ENCODE measurements at regions of chr5 and their contacts with region 1.

Region 1: GRCh38 chr5:142713121-142713706 is 27.3 kb upstream of the FGF1 start:
- DNase-seq: peak; percentile 96
- H3K4me3 Mint-ChIP-seq: peak overlapping the region; percentile 80
- H3K27ac Mint-ChIP-seq: peak overlapping the region; percentile 63
- H3K4me1 Mint-ChIP-seq: peaks cover 23% of the 10 kb centered on the region
- H3K27me3 Mint-ChIP-seq: no peaks in the 10 kb centered on the region
- CTCF ChIP-seq: peak; percentile 99

Region 2: DNA sequence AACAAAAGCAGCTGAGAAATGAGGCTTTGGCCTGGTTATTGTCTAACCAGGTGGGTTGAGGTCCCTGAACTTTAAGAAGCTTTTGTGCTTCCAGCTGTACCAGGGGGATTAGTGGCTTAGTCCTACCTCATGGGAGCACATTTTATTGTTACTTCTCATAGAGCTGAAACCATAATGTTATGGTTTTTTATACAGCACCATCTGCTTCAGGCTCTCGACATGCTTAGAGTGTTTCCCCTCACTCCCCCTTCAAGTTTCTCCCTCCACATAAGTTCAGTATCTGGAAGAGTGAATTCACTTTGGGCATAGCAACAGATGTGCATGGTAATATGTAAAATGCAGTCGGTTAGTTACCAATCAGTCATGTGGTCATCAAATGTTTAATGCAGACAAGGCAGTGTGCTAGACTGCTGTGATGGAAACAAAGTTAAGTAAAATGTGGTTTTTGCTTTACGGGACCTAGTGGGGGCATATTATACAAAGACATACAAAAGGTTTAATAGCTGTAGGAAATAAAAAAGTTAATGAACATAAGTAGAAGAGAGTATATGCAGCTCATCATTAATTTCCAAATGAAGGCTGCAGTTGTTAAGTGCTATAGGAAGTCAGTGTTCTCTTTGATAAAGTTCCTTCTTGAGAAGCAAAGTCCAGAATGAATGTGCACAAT is 292.5 kb before region 1 on chr5:
- CTCF ChIA-PET with region 1: no interaction called
- intact Hi-C with region 1: no loop called
- DNase-seq: no peak
- H3K4me3 Mint-ChIP-seq: no peak overlapping the region
- H3K27ac Mint-ChIP-seq: no peak overlapping the region
- H3K4me1 Mint-ChIP-seq: peaks cover 18% of the 10 kb centered on the region
- H3K27me3 Mint-ChIP-seq: no peaks in the 10 kb centered on the region
- CTCF ChIP-seq: no peak

Region 3: GRCh38 chr5:142644640-142645361 is 68.4 kb before region 1 on chr5:
- CTCF ChIA-PET with region 1: interaction called, 10 read pairs
- intact Hi-C with region 1: no loop called
- DNase-seq: peak; percentile 50
- H3K4me3 Mint-ChIP-seq: no peak overlapping the region
- H3K27ac Mint-ChIP-seq: no peak overlapping the region
- H3K4me1 Mint-ChIP-seq: peaks cover 22% of the 10 kb centered on the region
- H3K27me3 Mint-ChIP-seq: peaks cover 15% of the 10 kb centered on the region
- CTCF ChIP-seq: no peak

Region 4: DNA sequence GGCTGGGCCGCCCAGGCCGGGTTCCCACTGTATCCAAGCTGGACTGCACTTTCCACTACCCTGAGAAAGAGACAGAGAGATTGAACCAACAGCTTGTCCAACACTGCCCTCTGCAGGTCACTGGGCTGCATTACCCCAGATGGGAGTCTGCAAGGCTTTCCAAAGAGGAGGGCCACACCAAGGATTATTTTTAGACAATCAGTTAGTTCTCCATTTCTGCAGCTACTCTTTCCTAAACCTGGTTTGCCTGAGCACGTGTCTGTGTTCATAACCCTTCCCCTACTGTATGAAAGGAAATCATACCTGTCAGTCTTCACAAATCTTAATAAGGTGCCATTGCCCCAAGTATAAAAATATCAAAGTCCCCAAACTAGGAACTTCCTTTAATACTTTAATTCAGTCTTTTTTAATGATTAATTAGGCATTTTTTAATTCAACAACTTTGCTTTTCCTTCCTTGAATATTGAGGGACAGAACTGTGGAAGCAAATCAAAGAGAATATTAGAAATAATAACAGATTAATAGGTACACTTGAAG is 14.0 kb before region 1 on chr5:
- CTCF ChIA-PET with region 1: interaction called, 21 read pairs
- intact Hi-C with region 1: no loop called
- DNase-seq: peak; percentile 93
- H3K4me3 Mint-ChIP-seq: no peak overlapping the region
- H3K27ac Mint-ChIP-seq: no peak overlapping the region
- H3K4me1 Mint-ChIP-seq: peaks cover 22% of the 10 kb centered on the region
- H3K27me3 Mint-ChIP-seq: peaks cover 16% of the 10 kb centered on the region
- CTCF ChIP-seq: peak; percentile 99

Region 5: DNA sequence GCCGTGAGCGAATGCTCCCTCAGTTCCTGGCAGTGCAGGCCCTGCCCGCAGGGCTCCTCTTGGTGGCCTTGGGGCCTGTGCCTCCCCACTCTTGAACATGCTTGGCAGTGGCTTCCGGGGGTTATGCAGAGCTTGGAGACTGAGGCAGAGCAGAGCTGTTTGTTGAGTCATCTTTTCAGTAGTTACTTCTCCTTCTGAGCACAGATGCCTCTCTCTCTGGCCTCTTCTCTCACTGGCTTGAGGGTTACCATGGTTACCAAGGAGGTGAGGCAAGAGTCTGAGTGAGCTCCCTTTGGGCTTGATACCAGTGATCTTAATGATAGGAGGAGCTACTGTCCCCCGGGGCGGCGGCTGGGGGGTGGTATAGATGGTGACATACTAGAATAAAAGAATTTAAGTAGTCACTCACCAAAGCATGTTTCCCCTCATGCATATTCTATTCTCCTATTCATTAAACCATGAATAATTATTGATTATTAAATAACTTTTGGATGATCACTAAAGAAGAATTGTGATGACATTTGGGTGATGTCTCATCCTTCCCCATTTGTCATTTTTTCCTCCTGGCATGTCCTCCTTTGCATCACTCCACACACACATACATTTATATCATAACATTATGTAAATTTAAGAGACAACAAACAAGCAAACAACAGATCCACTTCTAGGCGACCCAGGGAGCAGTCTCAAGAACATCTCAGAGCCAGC is 168.0 kb after region 1 on chr5:
- CTCF ChIA-PET with region 1: interaction called, 31 read pairs
- intact Hi-C with region 1: loop called (anchors 1 kb)
- DNase-seq: no peak
- H3K4me3 Mint-ChIP-seq: no peak overlapping the region
- H3K27ac Mint-ChIP-seq: no peak overlapping the region
- H3K4me1 Mint-ChIP-seq: peaks cover 42% of the 10 kb centered on the region
- H3K27me3 Mint-ChIP-seq: no peaks in the 10 kb centered on the region
- CTCF ChIP-seq: no peak

Region 6: GRCh38 chr5:142915813-142916424 is 202.7 kb after region 1 on chr5:
- CTCF ChIA-PET with region 1: interaction called, 11 read pairs
- intact Hi-C with region 1: no loop called
- DNase-seq: peak; percentile 66
- H3K4me3 Mint-ChIP-seq: no peak overlapping the region
- H3K27ac Mint-ChIP-seq: peak overlapping the region; percentile 10
- H3K4me1 Mint-ChIP-seq: peaks cover 58% of the 10 kb centered on the region
- H3K27me3 Mint-ChIP-seq: no peaks in the 10 kb centered on the region
- CTCF ChIP-seq: peak; percentile 64